ENCODE measurements at regions of chr4 and their contacts with region 1.

Region 1: GRCh38 chr4:150923945-150924344 is 91.1 kb downstream of the LRBA start:
- DNase-seq: no peak
- ATAC-seq: no peak
- H3K4me3 ChIP-seq: no peak overlapping the region
- H3K27ac ChIP-seq: no peak overlapping the region
- H3K4me1 ChIP-seq: peaks cover 19% of the 10 kb centered on the region
- H3K27me3 ChIP-seq: no peaks in the 10 kb centered on the region
- CTCF ChIP-seq: no peak

Region 2: DNA sequence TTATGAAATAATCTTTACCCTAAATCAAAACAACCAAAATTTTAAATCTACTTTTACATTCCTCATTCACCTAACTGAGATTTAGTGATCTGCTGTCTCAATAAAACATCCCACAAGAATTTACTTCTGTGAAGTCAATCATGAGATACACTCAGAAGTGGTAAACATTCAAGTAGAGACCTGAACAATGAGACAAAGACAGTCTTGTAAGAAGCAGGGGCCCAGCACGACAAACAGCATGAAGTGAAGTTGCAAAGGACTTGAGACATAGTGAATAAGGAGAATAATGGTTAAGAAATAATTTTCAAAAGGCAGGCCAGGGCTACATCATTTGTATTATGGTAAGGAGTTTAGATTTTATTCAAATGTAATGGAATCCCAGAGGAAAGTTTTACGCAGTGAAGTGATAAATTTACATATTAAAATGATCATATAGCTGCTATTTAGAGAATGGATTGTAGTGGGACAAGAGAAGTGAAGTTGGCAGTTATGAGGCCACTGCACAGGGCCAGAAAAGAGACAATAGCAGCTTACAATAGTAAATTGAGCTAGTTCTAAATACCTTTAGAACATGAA is 240.1 kb before region 1 on chr4:
- CTCF ChIA-PET with region 1: no interaction called
- POLR2A ChIA-PET with region 1: no interaction called
- intact Hi-C with region 1: no loop called
- DNase-seq: no peak
- ATAC-seq: no peak
- H3K4me3 ChIP-seq: no peak overlapping the region
- H3K27ac ChIP-seq: no peak overlapping the region
- H3K4me1 ChIP-seq: no peaks in the 10 kb centered on the region
- H3K27me3 ChIP-seq: no peaks in the 10 kb centered on the region
- CTCF ChIP-seq: no peak

Region 3: GRCh38 chr4:150818661-150819060 is 105.3 kb before region 1 on chr4:
- CTCF ChIA-PET with region 1: no interaction called
- POLR2A ChIA-PET with region 1: no interaction called
- intact Hi-C with region 1: no loop called
- DNase-seq: peak; percentile 53
- ATAC-seq: peak; percentile 73
- H3K4me3 ChIP-seq: no peak overlapping the region
- H3K27ac ChIP-seq: no peak overlapping the region
- H3K4me1 ChIP-seq: no peaks in the 10 kb centered on the region; the same call in 1 of the 2 replicates
- H3K27me3 ChIP-seq: no peaks in the 10 kb centered on the region
- CTCF ChIP-seq: no peak

Region 4: GRCh38 chr4:150896497-150896896 is 27.4 kb before region 1 on chr4:
- CTCF ChIA-PET with region 1: interaction called, 14 read pairs
- POLR2A ChIA-PET with region 1: no interaction called
- intact Hi-C with region 1: no loop called
- DNase-seq: no peak
- ATAC-seq: no peak
- H3K4me3 ChIP-seq: no peak overlapping the region
- H3K27ac ChIP-seq: no peak overlapping the region
- H3K4me1 ChIP-seq: no peaks in the 10 kb centered on the region
- H3K27me3 ChIP-seq: no peaks in the 10 kb centered on the region
- CTCF ChIP-seq: no peak

Region 5: DNA sequence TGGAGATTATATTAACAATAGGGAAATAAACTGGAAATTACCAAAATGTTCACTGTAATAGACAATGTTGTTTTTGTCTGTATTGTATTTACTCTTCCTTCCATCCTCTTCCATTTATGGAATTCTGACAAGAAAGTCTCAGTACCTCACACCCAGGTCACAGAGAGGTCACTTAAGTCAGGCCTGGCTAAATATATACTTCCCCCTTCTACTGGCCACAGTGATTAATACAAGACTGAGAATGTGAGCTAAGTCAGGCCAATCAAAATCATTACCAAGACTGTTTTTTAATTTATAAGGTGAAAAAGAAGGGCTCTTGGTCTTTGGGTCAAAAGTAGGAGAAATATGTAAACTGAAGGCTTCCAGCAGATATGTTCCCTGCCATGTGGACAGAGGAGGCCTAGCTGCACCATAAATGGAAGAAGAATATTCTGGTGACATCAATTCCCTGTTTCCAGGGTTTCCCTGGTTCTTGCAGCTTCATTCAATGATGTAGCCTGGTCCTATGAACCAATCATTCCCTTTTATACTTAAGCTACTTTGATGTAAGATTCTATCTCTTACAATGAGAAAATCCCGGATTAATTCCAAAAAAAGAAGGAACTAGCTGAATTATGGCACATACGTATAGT is 26.8 kb after region 1 on chr4:
- CTCF ChIA-PET with region 1: no interaction called
- POLR2A ChIA-PET with region 1: no interaction called
- intact Hi-C with region 1: no loop called
- DNase-seq: no peak
- ATAC-seq: no peak
- H3K4me3 ChIP-seq: no peak overlapping the region
- H3K27ac ChIP-seq: no peak overlapping the region
- H3K4me1 ChIP-seq: peaks cover 4% of the 10 kb centered on the region; the same call in 1 of the 2 replicates
- H3K27me3 ChIP-seq: no peaks in the 10 kb centered on the region
- CTCF ChIP-seq: no peak

Region 6: DNA sequence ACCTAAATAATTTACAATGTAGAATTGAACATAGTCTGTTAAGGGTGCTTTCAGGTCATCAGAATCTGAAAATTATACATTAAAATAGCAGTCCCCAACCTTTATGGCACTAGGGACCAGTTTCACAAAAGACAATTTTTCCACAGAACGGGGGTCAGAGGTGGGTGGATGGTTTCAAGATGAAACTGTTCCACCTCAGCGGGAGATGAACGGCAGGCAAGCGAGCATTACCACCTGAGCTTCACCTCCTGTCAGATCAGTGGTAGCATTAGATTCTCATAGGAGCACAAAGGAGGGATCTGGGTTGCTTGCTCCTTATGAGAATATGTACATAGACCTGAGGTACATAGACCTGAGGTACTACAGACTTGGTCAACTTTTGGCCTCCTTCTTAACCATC is 62.1 kb after region 1 on chr4:
- CTCF ChIA-PET with region 1: no interaction called
- POLR2A ChIA-PET with region 1: no interaction called
- intact Hi-C with region 1: no loop called
- DNase-seq: no peak
- ATAC-seq: no peak
- H3K4me3 ChIP-seq: no peak overlapping the region
- H3K27ac ChIP-seq: no peak overlapping the region
- H3K4me1 ChIP-seq: no peaks in the 10 kb centered on the region
- H3K27me3 ChIP-seq: no peaks in the 10 kb centered on the region
- CTCF ChIP-seq: no peak

Measured in PC-3 (cell line).